ENCODE measurements at regions of chr1 and their contacts with region 1.

Region 1: DNA sequence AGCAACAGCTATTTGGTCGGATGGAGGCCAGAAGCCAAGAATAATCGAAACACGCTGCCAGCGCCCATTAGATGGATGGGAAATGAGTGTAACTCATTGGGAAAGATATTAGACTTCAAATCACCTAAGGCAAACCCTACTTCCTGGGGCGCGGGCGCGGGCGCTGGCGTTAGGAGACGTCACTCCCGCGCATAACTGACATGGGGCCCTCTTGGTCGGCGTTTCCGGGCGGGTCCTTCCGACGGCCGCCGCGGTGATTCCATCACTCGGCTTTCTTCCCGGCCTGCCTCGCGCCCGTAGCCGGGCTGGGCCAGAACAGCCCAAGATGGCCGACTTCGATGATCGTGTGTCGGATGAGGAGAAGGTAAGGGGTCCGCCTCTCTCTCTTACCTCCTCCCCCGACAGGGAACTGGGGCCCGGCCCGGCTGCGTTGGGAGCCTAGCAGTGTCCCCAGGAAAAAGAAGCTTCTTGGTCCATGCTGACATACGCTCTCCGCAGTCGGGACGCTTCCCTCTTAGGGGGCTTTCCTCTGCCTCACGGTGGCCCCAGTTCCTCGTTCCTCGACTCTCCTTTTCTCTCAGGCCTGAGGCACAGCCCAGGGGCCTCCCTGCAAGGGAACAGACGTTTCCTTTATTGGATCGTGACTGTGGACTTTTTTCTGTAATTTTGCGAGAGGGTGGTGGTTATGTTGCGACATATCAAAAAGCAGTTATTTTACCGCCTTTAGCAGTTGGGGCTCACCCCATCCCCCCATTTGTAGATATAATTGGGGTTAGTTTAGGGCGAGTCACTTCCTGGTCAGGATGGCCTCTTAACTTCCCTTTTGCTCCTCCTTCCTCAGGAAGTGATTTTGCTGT is at the start of gene CAPZA1:
- DNase-seq: peak; percentile 95
- H3K4me3 Mint-ChIP-seq: peak within 1 kb of the TSS; percentile 96
- H3K27ac Mint-ChIP-seq: peak within 1 kb of the TSS; percentile 99
- H3K4me1 Mint-ChIP-seq: peaks cover 32% of the 10 kb centered on the region
- H3K27me3 Mint-ChIP-seq: no peaks in the 10 kb centered on the region
- total RNA-seq, gene CAPZA1: 340 to 342 TPM

Region 2: DNA sequence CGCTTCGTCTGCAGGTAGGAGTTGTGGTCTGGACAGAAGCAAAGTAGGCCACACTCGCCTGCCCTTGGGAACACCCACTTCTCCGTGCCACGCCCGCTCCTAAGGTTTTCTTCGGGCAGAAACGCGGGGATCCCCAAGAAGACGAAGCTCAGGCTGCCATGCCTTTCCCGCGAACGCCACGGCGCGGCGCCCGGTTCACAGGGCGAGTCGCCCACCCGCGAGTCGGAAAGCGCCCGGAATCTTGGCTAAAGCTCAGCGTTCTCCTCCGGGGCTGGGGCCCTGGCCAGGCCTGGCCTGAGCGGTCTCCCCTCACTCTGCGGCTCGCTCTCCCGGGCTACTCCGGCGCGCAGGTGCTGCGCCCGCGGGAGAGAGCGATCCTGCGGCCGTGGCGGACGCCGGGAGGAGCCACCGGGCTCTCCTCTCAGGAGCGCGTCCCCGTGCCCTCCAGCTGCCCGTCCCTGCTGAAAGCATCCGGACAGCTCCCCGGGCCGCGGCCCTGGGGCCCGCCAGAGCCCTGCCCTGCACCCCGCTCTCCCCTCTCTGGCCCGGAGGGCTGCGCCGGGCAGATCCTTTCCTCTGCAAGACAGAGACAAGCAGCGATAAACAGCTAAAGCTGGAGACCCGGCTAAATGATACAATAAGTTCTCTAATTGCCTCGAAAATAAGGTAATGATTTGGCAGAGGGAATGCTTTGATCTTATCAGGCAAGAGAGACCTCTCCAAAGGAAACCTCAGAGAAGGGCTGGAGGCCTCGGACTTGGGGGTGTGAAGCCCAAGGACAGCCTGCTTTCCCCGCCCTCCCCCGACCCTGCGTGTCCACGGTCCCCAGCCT is 117.7 kb before region 1 on chr1:
- CTCF ChIA-PET with region 1: interaction called, 96 read pairs
- POLR2A ChIA-PET with region 1: interaction called, 13 read pairs
- DNase-seq: peak; percentile 58
- H3K4me3 Mint-ChIP-seq: peak overlapping the region; percentile 40
- H3K27ac Mint-ChIP-seq: no peak overlapping the region
- H3K4me1 Mint-ChIP-seq: peaks cover 7% of the 10 kb centered on the region
- H3K27me3 Mint-ChIP-seq: peaks cover 58% of the 10 kb centered on the region

Region 3: GRCh38 chr1:112637254-112638116 is 17.7 kb after region 1 on chr1:
- CTCF ChIA-PET with region 1: interaction called, 6 read pairs
- POLR2A ChIA-PET with region 1: interaction called, 76 read pairs
- DNase-seq: no peak
- H3K4me3 Mint-ChIP-seq: no peak overlapping the region
- H3K27ac Mint-ChIP-seq: no peak overlapping the region
- H3K4me1 Mint-ChIP-seq: peaks cover 53% of the 10 kb centered on the region
- H3K27me3 Mint-ChIP-seq: no peaks in the 10 kb centered on the region

Region 4: DNA sequence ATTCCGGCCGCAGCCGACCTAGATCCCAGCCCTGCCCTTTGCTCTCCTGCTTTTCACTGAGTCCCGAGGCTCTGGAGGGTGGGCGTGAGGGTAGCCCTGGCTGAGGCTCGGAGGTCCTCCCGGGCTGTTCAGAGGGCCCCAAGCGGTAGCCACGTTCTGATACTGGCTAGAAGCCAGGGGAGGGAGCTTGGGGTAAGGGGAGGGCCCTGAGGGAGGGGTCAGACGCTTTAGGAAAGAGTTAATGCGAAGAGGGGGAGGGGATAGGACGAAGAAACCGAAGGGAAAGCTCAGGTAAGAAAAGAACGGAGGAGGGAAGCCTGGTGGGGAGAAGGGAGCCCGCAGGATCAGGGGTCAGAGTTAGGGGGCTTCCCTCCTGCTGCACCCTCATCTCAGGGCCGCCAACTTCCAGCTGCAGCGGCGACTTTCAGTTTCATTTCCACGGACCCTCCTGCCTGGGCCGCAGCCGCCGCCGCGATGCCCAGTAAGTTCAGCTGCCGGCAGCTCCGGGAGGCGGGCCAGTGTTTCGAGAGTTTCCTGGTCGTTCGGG is 54.8 kb after region 1 on chr1 and contains the start of gene MOV10:
- CTCF ChIA-PET with region 1: interaction called, 8 read pairs
- POLR2A ChIA-PET with region 1: interaction called, 101 read pairs
- DNase-seq: peak; percentile 71
- H3K4me3 Mint-ChIP-seq: peak within 1 kb of the TSS; percentile 96
- H3K27ac Mint-ChIP-seq: peak within 1 kb of the TSS; percentile 91
- H3K4me1 Mint-ChIP-seq: peaks cover 43% of the 10 kb centered on the region
- H3K27me3 Mint-ChIP-seq: no peaks in the 10 kb centered on the region
- total RNA-seq, gene MOV10: 100 to 102 TPM

Region 5: DNA sequence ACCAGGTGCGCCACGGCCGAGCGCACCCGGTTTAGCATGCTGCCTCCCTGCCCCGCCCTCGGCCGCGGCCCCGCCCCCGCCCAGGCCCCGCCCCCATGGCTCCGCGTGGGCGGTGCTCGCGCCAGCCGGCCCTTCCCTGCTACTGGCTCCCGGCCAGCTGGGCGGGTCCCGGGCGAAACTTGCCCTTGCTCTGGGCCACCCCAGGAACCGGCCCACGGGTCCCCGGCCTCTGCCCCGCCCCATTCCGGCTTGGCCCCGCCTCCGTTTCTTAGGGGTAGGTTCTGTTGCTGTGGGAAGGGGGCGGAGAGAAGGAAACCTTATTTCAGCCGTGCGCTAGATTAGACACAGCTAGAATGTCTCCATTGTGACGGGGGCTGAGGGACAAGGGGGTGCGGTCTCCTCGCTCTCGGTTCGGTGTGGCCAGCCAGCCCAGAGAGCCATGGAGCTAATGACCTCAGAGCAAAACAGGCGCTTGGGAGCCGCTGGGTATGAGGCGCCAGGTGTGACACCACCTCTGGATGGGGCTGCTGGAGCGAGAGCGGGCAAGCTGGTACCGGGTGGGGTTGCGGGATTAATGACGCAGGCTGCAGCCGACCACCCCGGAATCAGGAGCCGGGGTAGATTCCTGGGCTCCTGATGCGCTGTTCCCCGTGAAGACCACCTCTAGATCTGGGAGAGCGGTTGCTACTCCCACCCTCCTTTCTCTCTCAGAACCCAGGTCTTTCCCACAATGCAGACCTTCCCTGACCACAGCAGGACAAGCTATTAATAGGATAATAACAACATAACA is 95.7 kb after region 1 on chr1 and contains the start of gene PPM1J:
- CTCF ChIA-PET with region 1: interaction called, 10 read pairs
- POLR2A ChIA-PET with region 1: interaction called, 12 read pairs
- DNase-seq: peak; percentile 99
- H3K4me3 Mint-ChIP-seq: peak within 1 kb of the TSS; percentile 81
- H3K27ac Mint-ChIP-seq: no peak within 1 kb of the TSS
- H3K4me1 Mint-ChIP-seq: peaks cover 32% of the 10 kb centered on the region
- H3K27me3 Mint-ChIP-seq: peaks cover 53% of the 10 kb centered on the region
- total RNA-seq, gene PPM1J: not detected

Measured in activated CD4-positive, alpha-beta memory T cell treated with anti-CD3 and anti-CD28 coated beads, Interleukin-2, amount 10 ng/mL, durations not matched to agents 7 days and 5 days (primary cell).